Kidney (tissue), 22 donors: ENCODE measurements at regions of chr15 and their contacts with region 1.

Region 1: DNA sequence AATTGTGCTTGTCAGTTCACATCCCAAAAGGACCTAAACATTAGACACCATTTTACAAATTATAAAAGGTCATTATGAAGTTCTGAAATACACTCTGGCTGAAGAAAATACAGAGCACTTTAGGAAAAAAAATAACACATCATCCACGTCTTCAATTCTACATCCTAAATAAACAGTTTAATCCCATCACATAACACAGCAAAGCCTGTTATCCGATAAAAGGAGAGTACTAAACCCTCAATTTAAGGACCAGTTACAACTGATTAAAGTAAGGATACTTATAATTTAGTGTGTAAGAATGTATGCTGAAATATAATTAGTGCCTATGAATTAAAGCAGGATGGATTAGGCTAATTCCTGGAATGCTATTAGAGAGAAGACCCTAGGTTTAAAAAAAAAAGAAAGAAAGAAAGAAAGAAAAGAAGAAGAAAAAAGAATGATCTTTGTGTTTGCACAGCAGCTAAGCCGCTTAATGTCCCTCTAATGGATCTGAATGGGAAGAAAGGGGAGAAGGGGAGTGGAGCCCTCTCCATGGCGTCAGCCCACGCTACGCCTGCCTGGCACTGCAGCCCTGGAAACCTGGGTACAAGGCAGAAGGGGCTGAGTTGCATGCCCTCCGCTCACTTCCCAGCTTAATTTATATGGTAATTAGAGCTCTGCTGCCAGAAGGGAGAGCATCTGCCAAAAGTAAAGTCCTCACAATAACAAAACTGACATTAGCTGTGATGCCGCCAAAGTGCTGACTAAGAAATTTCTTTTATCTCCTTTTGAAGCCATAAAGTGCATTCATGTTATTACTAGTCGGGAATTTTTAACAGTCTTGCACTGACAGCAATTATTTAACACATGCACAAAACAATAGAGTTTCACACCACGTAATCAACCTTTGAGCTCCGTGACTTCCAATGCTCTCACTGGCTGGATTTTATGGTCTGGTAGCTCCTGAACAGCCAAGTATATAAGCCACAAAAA is 90.0 kb downstream of the FSIP1 start:
- DNase-seq: peak in 4 of 5 donors; percentile 58 to 80 (median 75)
- H3K4me3 ChIP-seq: peak overlapping the region; percentile 10 to 45 (median 27)
- H3K27ac ChIP-seq: no peak overlapping the region
- H3K4me1 ChIP-seq: peaks cover 0 to 5% (median 0%) of the 10 kb centered on the region in 3 donors
- H3K27me3 ChIP-seq: no peaks in the 10 kb centered on the region
- CTCF ChIP-seq: no peak

Region 2: GRCh38 chr15:39756806-39757522 is 64.3 kb after region 1 on chr15:
- intact Hi-C with region 1: loop called (anchors 10 kb)
- DNase-seq: peak in 2 of 5 donors; percentile 74 to 76
- H3K4me3 ChIP-seq: no peak overlapping the region
- H3K27ac ChIP-seq: no peak overlapping the region
- H3K4me1 ChIP-seq: no peaks in the 10 kb centered on the region
- H3K27me3 ChIP-seq: no peaks in the 10 kb centered on the region
- CTCF ChIP-seq: peak; percentile 76